Activated CD4-positive, alpha-beta memory T cell treated with anti-CD3 and anti-CD28 coated beads for 36 hours (primary cell): ENCODE measurements at regions of chr13 and their contacts with region 1.

Region 1: GRCh38 chr13:21476893-21477472 is 17.9 kb upstream of the ZDHHC20 start:
- DNase-seq: peak; percentile 89
- H3K4me3 Mint-ChIP-seq: peak overlapping the region; percentile 65
- H3K27ac Mint-ChIP-seq: no peak overlapping the region
- H3K4me1 Mint-ChIP-seq: peaks cover 12% of the 10 kb centered on the region
- H3K27me3 Mint-ChIP-seq: no peaks in the 10 kb centered on the region

Region 2: DNA sequence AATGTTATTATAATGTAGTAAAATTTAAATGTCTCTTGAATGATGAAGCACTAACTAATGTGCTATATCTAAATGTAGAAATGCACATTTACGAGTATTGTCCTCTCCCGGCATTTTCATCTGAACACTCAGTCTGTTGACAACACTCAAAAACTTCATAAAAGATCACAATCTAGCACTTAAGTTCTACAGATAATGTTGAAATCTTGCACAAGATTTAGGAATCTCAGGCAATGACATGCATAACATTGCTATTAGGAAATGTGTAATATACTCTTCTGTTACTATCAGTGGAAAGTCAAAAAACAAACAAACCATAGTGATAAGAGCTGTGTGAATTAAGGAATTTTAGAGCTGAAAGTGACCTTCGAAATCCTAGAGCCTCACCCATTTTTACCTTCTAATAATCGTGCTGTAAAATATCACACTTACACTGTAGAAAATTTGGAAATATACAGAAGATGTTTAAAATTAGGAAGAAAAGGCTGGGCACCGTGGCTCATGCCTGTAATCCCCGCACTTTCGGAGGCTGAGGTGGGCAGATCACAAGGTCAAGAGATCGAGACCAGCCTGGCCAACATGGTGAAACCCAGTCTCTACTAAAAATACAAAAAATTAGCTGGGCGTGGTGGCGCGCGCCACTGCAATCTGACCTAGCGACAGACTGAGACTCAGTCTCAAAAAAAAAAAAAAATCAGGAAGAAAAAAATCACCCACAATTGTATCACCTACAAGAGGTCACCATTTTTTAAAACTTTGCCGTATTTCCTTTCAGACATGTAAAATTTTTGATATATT is 536.7 kb before region 1 on chr13:
- CTCF ChIA-PET with region 1: interaction called, 25 read pairs
- POLR2A ChIA-PET with region 1: no interaction called
- intact Hi-C with region 1: loop called (anchors 1 kb)
- DNase-seq: no peak
- H3K4me3 Mint-ChIP-seq: no peak overlapping the region
- H3K27ac Mint-ChIP-seq: no peak overlapping the region
- H3K4me1 Mint-ChIP-seq: no peaks in the 10 kb centered on the region
- H3K27me3 Mint-ChIP-seq: peaks cover 19% of the 10 kb centered on the region

Region 3: DNA sequence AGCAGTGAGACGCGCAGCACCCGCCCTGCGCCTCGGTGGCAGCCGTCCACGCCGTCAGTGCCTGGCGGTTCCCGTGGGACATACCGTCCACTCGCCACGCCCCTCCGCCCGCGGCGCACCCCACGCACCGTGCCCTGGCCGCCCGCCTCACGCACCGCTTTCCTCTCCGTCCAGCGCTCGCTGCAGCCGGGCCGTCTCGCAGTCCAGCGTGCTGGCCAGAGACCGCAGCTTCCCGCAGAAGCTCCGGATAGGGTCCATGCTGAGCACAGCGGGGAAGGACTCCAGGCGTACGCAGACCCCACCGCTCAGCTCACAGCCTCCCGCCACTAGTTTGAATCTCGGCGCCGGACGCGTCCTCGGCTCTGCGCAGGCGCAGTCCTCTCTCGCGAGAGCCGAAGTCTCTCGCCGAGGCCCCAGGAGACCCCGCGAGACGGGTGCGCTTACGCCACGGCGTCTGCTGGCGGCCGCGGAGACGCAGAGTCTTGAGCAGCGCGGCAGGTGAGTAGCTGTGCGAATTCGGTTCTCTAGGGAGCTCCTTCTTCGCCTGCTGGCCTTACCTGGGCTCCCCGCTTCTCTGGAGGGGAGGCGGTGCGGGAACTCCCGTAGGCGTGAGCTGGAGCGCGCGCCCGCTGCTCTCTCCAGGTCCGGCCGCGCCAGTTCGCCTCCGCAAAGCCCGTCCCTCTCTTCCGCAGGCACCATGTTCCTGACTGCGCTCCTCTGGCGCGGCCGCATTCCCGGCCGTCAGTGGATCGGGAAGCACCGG is 300.6 kb before region 1 on chr13 and contains the starts of genes MRPL57 and SKA3:
- CTCF ChIA-PET with region 1: interaction called, 17 read pairs
- POLR2A ChIA-PET with region 1: no interaction called
- intact Hi-C with region 1: loop called (anchors 5 kb)
- DNase-seq: peak; percentile 96
- H3K4me3 Mint-ChIP-seq: peak within 1 kb of the TSS; percentile 99
- H3K27ac Mint-ChIP-seq: peak within 1 kb of the TSS; percentile 96
- H3K4me1 Mint-ChIP-seq: peaks cover 18% of the 10 kb centered on the region
- H3K27me3 Mint-ChIP-seq: no peaks in the 10 kb centered on the region
- total RNA-seq, gene MRPL57: 20.8 to 23.1 TPM
- total RNA-seq, gene SKA3: 34.0 to 36.2 TPM

Region 4: GRCh38 chr13:21402586-21403228 is 74.3 kb before region 1 on chr13:
- CTCF ChIA-PET with region 1: interaction called, 4 read pairs
- POLR2A ChIA-PET with region 1: no interaction called
- intact Hi-C with region 1: loop called (anchors 5 kb)
- DNase-seq: peak; percentile 17
- H3K4me3 Mint-ChIP-seq: no peak overlapping the region
- H3K27ac Mint-ChIP-seq: no peak overlapping the region
- H3K4me1 Mint-ChIP-seq: peaks cover 37% of the 10 kb centered on the region
- H3K27me3 Mint-ChIP-seq: no peaks in the 10 kb centered on the region

Region 5: DNA sequence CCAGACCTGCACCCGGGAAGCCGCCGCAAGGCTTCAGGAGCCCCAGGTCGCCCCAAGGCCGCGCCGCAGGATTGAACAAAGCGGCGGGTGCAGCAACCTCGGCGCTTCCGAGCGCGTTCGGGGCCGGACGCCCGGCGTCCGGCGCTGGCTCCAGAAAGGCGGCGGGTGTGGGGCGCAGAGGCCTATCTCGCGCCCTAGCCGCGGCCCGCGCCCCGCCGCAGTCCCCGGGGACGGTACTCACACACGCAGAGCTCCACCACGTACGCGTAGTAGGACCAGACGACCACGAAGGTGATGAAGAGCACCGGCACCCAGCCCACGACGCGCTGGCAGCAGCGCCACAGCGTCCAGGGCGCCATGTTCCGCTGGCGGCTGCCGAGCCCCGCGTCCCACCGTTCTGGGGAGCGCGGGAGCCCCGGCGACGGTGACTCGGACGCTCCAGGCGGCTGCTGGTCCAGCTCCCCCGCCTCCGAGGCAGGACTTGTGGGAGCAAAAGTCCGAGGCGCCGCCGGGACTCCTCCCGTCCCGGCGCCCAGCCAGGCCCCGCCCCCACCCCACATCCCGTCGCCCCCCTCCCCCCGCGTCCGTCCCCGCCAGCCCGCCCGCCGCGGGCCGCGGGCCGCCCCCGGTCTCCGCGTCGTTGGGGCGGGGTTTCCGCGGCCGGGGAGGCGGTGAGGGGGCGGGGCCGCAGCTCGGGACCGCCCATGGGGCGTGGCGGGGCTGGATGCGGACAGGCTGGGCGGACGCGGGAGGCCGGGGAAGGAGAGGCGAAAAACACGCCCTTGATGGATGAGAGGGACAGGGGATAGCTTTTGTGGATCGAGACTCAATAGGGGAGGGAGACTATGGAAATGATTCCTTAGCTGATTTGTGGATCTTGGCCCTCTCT is 17.9 kb before region 1 on chr13 and contains the start of gene ZDHHC20:
- CTCF ChIA-PET with region 1: interaction called, 13 read pairs
- POLR2A ChIA-PET with region 1: interaction called, 3 read pairs
- intact Hi-C with region 1: no loop called
- DNase-seq: peak; percentile 93
- H3K4me3 Mint-ChIP-seq: peak within 1 kb of the TSS; percentile 93
- H3K27ac Mint-ChIP-seq: peak within 1 kb of the TSS; percentile 90
- H3K4me1 Mint-ChIP-seq: peaks cover 29% of the 10 kb centered on the region
- H3K27me3 Mint-ChIP-seq: no peaks in the 10 kb centered on the region
- total RNA-seq, gene ZDHHC20: 53.5 to 60.6 TPM